Mammary epithelial cell (primary cell): ENCODE measurements at regions of chr3 and their contacts with region 1.

Region 1: DNA sequence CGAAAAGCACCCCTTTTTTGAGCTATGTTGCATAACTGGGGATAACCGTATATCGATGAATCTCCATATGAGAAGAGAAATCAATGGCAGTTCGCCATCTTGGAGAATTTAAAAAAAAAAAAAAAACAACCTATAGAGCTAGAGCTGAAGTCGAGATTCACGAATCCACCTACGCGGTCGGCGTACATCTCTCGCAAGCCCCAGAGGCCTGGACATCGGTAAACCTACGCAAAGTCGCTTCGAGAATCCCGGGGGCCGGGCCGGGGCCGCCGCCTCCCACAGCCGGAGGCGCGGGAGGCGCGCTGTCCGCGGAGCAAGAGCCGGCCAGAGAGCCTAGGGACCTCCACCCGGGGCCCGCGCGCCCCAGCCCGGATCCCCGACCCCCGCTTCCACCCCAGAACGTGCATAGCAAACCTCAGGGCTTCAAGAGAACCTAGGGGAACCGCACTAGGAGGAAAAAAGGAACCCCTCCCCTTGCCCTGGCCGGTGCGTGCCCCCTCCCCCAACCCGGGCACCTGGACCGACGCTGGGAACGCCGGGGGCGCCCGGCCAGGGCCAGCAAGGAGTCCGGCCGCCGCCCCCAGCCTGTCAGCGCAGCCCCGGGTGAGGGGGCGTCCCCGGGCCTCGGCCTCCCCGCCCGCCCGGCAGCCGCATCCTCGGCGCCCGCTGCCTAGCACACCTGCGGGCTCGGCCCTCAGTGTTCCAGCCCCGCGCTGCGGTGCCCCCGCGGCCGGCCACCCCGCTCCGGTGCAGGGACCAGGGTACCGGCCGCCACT is 567 bp downstream of the PFN2 start:
- DNase-seq: peak; percentile 79
- H3K4me3 ChIP-seq: peak overlapping the region; percentile 86 to 94 (median 89)
- H3K27ac ChIP-seq: peak overlapping the region; percentile 94
- H3K4me1 ChIP-seq: peaks cover 24% of the 10 kb centered on the region
- H3K27me3 ChIP-seq: no peaks in the 10 kb centered on the region
- CTCF ChIP-seq: no peak

Region 2: GRCh38 chr3:150079029-150079739 is 109.1 kb after region 1 on chr3:
- CTCF ChIA-PET with region 1: no interaction called
- dilution Hi-C with region 1: no loop called
- in situ Hi-C with region 1: no loop called
- intact Hi-C with region 1: loop called (anchors 1 kb)
- DNase-seq: peak; percentile 87
- H3K4me3 ChIP-seq: no peak overlapping the region
- H3K27ac ChIP-seq: peak overlapping the region; percentile 75
- H3K4me1 ChIP-seq: peaks cover 46% of the 10 kb centered on the region
- H3K27me3 ChIP-seq: no peaks in the 10 kb centered on the region
- CTCF ChIP-seq: peak in 1 of 2 donors; percentile 3

Region 3: GRCh38 chr3:150216041-150216811 is 246.1 kb after region 1 on chr3:
- CTCF ChIA-PET with region 1: interaction called, 6 read pairs
- dilution Hi-C with region 1: no loop called
- in situ Hi-C with region 1: no loop called
- intact Hi-C with region 1: loop called (anchors 1 kb)
- DNase-seq: peak; percentile 56
- H3K4me3 ChIP-seq: no peak overlapping the region
- H3K27ac ChIP-seq: no peak overlapping the region
- H3K4me1 ChIP-seq: peaks cover 16% of the 10 kb centered on the region
- H3K27me3 ChIP-seq: no peaks in the 10 kb centered on the region
- CTCF ChIP-seq: no peak

Region 4: DNA sequence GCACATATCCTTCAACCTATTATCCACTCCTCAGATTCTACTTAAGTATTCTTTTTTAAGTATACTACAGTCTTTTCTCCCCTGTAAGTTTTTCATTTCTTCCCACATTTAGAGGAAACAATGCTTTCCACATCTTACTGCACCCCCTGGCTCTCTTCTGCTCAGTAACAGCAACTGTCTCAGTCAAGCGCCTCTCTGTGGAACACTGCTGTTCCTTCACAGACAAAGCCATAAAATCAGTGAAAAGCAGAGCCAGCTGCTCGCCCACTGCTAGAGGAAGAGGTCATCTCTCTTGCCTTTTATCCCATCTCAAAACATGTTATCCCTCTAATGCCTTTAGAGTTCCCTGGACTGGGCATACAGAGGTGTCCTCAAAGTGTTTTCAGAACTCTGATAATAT is 551.3 kb after region 1 on chr3:
- CTCF ChIA-PET with region 1: no interaction called
- dilution Hi-C with region 1: no loop called
- in situ Hi-C with region 1: loop called (anchors 25 kb)
- intact Hi-C with region 1: no loop called
- DNase-seq: no peak
- H3K4me3 ChIP-seq: no peak overlapping the region
- H3K27ac ChIP-seq: no peak overlapping the region
- H3K4me1 ChIP-seq: peaks cover 4% of the 10 kb centered on the region
- H3K27me3 ChIP-seq: no peaks in the 10 kb centered on the region
- CTCF ChIP-seq: no peak